Left cardiac atrium (tissue), 4 donors: ENCODE measurements at regions of chr21 and their contacts with region 1.

Region 1: DNA sequence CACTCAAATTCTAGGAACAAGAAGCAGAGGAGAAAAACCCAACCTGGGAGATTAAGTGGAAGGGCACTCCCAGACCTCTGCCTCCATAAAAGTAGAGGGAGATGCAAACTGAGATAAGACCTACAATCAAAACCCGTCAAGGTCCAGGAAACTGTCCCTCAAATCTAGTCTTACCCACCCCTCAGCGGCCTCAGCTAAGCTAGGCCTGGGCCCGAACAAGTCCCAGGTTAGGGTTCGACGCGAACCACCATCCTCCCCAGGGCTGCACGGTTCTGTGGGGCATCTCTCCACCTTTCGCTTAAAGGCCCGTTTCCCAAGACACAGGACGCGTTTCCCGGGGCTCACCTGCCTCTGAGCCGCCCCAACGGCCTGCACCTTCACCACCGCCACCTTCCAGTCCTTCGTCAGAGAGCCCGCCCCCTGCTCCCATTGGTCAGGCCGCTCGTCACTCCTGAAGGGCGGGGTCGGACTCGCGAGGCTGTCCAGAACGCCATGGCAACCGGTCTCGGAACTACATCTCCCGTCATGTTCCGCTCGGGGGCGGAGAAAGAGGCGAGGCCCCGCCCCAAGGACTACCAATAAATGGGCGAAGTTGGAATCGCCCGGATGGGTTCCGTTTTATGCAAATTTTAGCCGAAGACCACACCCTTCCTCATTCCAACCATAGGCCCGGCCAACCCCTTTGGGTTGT is at the start of gene CRYZL1:
- DNase-seq: peak; percentile 100
- ATAC-seq: peak; percentile 89 to 93
- total RNA-seq, gene CRYZL1: 21.6 to 30.6 TPM

Region 2: DNA sequence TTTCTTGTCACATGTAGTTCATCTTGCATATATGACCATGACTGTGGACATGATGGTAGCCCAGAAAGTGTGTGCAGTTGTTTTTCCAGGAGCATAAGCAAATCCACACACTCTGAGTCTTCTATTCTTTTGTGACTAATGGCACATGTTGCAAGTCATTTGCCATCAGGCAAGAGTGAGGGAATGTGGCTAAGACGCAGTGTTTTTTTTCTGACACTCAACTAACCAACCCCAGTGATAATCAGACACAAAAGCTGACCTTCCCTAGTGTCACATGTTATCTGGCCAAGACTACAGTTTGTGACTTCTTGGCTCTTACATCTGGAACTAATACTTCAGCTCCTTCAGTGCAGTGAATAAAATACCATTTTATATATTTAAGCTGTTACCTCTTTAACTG is 109.6 kb after region 1 on chr21:
- intact Hi-C with region 1: loop called in 1 of 2 experiments (anchors 10 kb)
- DNase-seq: no peak
- ATAC-seq: peak in 1 of 2 donors; percentile 27

Region 3: GRCh38 chr21:33894736-33895288 is 253.3 kb after region 1 on chr21:
- intact Hi-C with region 1: loop called in 1 of 2 experiments (anchors 10 kb)
- DNase-seq: peak; percentile 84
- ATAC-seq: peak; percentile 93 to 95